MCF 10A (cell line): ENCODE measurements at regions of chr1 and their contacts with region 1.

Region 1: DNA sequence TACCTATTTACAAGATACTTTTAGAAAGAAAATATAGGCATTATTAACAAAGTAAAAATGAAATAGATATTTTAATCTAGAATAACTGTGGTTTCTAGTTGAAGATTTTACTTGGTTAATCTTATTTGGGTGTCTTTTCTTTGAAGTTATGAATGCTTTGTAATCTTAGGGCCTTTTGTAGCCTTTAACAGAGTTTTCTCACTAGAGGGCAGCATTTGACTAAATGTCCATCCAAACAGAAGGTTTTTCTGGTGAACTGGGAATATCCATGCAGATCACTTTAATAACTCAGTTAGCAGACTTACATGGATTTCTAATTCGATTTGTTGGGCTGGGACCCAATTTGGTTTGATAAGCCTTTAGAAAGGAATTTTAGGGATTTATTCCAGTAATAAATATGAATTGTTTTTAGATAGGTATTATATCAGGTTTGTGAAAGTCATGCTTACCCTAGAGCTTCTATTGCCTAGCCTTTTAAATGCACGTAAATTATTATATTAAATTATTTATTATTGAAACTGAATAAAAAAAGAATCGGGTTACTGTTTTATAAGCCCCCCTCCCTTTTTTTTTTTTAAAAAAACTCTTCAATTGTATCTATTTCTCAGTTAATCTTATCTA is 119.7 kb downstream of the ZNF326 start:
- DNase-seq: peak; percentile 67
- H3K4me3 Mint-ChIP-seq: no peak overlapping the region
- H3K27ac Mint-ChIP-seq: no peak overlapping the region
- H3K4me1 Mint-ChIP-seq: no peaks in the 10 kb centered on the region
- H3K27me3 Mint-ChIP-seq: peaks cover 50% of the 10 kb centered on the region
- CTCF ChIP-seq: peak; percentile 62

Region 2: DNA sequence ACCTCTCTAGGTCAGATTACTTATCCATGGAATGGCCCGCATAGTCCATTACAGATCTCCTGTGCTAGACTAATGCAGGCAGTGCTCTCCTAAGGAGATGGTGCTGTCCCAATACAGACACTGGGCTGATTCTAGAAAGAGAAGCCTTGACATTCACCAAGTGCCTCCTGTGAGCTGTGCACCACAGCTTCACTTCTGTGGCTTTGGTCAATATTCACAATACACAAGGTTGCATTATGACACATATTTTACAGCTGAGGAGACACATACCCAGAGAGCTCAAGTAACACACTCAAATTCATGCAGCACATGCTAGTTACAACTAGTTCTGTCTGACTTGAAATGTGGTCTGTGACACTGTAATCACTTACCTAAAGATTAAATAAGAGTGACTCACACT is 649.4 kb before region 1 on chr1:
- CTCF ChIA-PET with region 1: no interaction called
- POLR2A ChIA-PET with region 1: no interaction called
- intact Hi-C with region 1: no loop called
- DNase-seq: peak; percentile 45
- H3K4me3 Mint-ChIP-seq: no peak overlapping the region
- H3K27ac Mint-ChIP-seq: no peak overlapping the region
- H3K4me1 Mint-ChIP-seq: peaks cover 5% of the 10 kb centered on the region
- H3K27me3 Mint-ChIP-seq: peaks cover 15% of the 10 kb centered on the region
- CTCF ChIP-seq: no peak

Region 3: GRCh38 chr1:89780721-89781120 is 333.9 kb before region 1 on chr1:
- CTCF ChIA-PET with region 1: no interaction called
- POLR2A ChIA-PET with region 1: no interaction called
- intact Hi-C with region 1: loop called (anchors 10 kb)
- DNase-seq: peak; percentile 61
- H3K4me3 Mint-ChIP-seq: no peak overlapping the region
- H3K27ac Mint-ChIP-seq: no peak overlapping the region
- H3K4me1 Mint-ChIP-seq: no peaks in the 10 kb centered on the region
- H3K27me3 Mint-ChIP-seq: no peaks in the 10 kb centered on the region
- CTCF ChIP-seq: peak; percentile 38

Region 4: GRCh38 chr1:90045853-90046563 is 68.6 kb before region 1 on chr1:
- CTCF ChIA-PET with region 1: no interaction called
- POLR2A ChIA-PET with region 1: no interaction called
- intact Hi-C with region 1: loop called (anchors 10 kb)
- DNase-seq: peak; percentile 39
- H3K4me3 Mint-ChIP-seq: no peak overlapping the region
- H3K27ac Mint-ChIP-seq: no peak overlapping the region
- H3K4me1 Mint-ChIP-seq: no peaks in the 10 kb centered on the region
- H3K27me3 Mint-ChIP-seq: peaks cover 16% of the 10 kb centered on the region
- CTCF ChIP-seq: peak; percentile 52

Region 5: DNA sequence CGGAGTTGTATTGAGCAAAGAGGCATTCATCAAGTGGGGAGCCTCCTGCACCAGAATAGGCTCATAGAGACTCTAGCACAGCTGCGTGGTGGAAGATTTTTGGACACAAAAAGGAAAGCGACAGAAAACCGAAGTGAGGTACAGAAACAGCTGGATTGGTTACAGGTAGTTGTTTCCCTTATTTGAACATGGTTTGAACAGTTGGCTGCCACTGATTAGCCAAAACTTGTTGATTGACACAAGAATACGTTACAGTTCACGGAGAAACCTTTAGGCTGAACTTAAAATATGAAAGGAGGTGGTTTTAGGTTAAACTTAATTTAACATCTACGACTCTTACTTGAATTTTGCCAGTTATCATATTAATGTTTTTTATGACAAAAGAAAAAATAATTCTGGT is 30.6 kb before region 1 on chr1:
- CTCF ChIA-PET with region 1: no interaction called
- POLR2A ChIA-PET with region 1: no interaction called
- intact Hi-C with region 1: no loop called
- DNase-seq: no peak
- H3K4me3 Mint-ChIP-seq: no peak overlapping the region
- H3K27ac Mint-ChIP-seq: no peak overlapping the region
- H3K4me1 Mint-ChIP-seq: no peaks in the 10 kb centered on the region
- H3K27me3 Mint-ChIP-seq: peaks cover 82% of the 10 kb centered on the region
- CTCF ChIP-seq: no peak

Region 6: GRCh38 chr1:90133133-90133532 is 18.5 kb after region 1 on chr1:
- CTCF ChIA-PET with region 1: interaction called, 12 read pairs
- POLR2A ChIA-PET with region 1: no interaction called
- intact Hi-C with region 1: no loop called
- DNase-seq: peak; percentile 77
- H3K4me3 Mint-ChIP-seq: no peak overlapping the region
- H3K27ac Mint-ChIP-seq: no peak overlapping the region
- H3K4me1 Mint-ChIP-seq: no peaks in the 10 kb centered on the region
- H3K27me3 Mint-ChIP-seq: peaks cover 18% of the 10 kb centered on the region
- CTCF ChIP-seq: peak; percentile 74

Region 7: GRCh38 chr1:90579212-90579802 is 464.7 kb after region 1 on chr1:
- CTCF ChIA-PET with region 1: interaction called, 4 read pairs
- POLR2A ChIA-PET with region 1: no interaction called
- intact Hi-C with region 1: loop called (anchors 1 kb)
- DNase-seq: peak; percentile 48
- H3K4me3 Mint-ChIP-seq: no peak overlapping the region
- H3K27ac Mint-ChIP-seq: no peak overlapping the region
- H3K4me1 Mint-ChIP-seq: peaks cover 8% of the 10 kb centered on the region
- H3K27me3 Mint-ChIP-seq: no peaks in the 10 kb centered on the region
- CTCF ChIP-seq: peak; percentile 41

Region 8: DNA sequence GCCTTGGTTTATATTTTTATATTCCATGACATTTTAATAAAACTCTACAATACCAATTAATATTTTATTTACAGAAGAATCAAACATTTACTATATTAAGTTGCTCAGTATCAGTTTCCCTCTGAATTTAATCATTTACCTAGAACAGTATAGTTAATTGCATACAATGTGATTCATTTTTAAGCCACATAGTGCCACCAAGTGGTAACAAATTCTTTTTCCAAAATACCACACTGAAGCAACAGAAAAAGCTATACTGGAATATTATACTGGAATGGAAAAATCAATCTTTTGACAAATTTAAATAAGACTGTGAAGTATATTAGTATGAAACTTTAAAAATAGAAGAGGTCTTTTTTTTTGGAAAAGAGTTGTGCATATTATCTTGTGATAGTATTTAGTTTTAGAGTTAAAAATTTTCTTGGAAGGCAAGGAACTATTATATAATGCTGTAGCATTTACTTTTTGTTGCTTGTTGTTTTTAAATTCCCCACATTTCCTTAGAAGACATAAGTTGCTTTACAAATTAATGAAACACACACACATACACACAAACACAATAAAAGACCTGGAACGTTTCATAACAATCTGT is 849.9 kb after region 1 on chr1:
- CTCF ChIA-PET with region 1: interaction called, 4 read pairs
- POLR2A ChIA-PET with region 1: no interaction called
- intact Hi-C with region 1: loop called (anchors 5 kb)
- DNase-seq: peak; percentile 33
- H3K4me3 Mint-ChIP-seq: no peak overlapping the region
- H3K27ac Mint-ChIP-seq: no peak overlapping the region
- H3K4me1 Mint-ChIP-seq: peaks cover 33% of the 10 kb centered on the region
- H3K27me3 Mint-ChIP-seq: no peaks in the 10 kb centered on the region
- CTCF ChIP-seq: peak; percentile 49

Region 9: GRCh38 chr1:91282695-91283420 is 1168.2 kb after region 1 on chr1:
- CTCF ChIA-PET with region 1: interaction called, 8 read pairs
- POLR2A ChIA-PET with region 1: no interaction called
- intact Hi-C with region 1: loop called (anchors 5 kb)
- DNase-seq: peak; percentile 75
- H3K4me3 Mint-ChIP-seq: no peak overlapping the region
- H3K27ac Mint-ChIP-seq: no peak overlapping the region
- H3K4me1 Mint-ChIP-seq: no peaks in the 10 kb centered on the region
- H3K27me3 Mint-ChIP-seq: peaks cover 31% of the 10 kb centered on the region
- CTCF ChIP-seq: peak; percentile 69